Dendritic cell treated with granulocyte-macrophage colony-stimulating factor and Interleukin-4, amounts not matched to agents 40 ng/mL and 50 ng/mL, for 4 days (primary cell): ENCODE measurements at regions of chr12 and their contacts with region 1.

Region 1: GRCh38 chr12:3872800-3873636 is at the start of gene PARP11:
- H3K4me3 Mint-ChIP-seq: peak within 1 kb of the TSS; percentile 90
- H3K27ac Mint-ChIP-seq: peak within 1 kb of the TSS; percentile 96
- H3K4me1 Mint-ChIP-seq: peaks cover 42% of the 10 kb centered on the region
- H3K27me3 Mint-ChIP-seq: peaks cover 1% of the 10 kb centered on the region

Region 2: GRCh38 chr12:3670083-3670620 is 202.9 kb before region 1 on chr12:
- intact Hi-C with region 1: no loop called
- H3K4me3 Mint-ChIP-seq: no peak overlapping the region
- H3K27ac Mint-ChIP-seq: no peak overlapping the region
- H3K4me1 Mint-ChIP-seq: no peaks in the 10 kb centered on the region
- H3K27me3 Mint-ChIP-seq: no peaks in the 10 kb centered on the region

Region 3: DNA sequence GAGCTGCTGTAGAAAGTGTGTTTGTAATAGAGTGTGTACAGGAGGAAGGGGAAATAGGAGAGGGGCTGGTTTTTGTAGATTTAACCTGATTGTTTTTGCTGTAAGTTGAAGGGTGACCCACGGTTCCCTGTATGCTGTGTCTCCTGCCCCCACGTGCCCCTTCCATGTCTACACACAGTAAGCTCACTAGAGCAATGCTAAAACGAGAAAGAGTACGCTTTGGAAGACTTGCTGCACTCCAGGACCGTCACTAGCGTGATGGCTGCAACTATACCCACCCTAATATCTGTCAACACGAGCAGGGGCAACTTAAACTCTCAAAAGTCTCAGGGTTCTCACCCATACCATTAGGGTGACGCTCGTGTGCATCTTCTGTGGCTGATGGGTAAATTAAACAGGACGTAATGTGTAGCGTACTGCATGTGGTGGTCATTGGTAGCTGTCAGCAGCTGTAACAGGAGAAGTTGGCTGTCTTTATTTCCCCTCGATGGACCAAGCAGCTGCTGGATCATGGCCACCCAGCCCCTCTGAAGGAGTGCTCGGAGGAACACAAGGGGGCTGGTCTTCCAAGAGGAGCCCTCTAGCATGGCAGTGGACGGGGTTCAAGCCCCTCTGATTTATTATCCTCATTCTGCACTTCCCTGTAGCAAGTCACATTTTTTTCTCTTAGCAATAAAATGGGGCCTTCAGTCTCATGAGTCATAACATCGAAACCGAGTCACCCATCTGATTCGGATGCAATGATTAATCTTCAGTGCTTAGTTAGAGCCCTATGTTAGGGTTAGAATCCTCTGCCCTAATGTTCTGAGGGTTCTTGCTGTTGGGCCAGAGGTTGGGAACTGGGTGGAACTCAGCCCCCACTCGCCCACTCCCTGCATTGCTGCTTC is 414.6 kb after region 1 on chr12:
- intact Hi-C with region 1: loop called (anchors 5 kb)
- H3K4me3 Mint-ChIP-seq: peak overlapping the region; percentile 41
- H3K27ac Mint-ChIP-seq: peak overlapping the region; percentile 88
- H3K4me1 Mint-ChIP-seq: peaks cover 84% of the 10 kb centered on the region
- H3K27me3 Mint-ChIP-seq: peaks cover 1% of the 10 kb centered on the region

Region 4: DNA sequence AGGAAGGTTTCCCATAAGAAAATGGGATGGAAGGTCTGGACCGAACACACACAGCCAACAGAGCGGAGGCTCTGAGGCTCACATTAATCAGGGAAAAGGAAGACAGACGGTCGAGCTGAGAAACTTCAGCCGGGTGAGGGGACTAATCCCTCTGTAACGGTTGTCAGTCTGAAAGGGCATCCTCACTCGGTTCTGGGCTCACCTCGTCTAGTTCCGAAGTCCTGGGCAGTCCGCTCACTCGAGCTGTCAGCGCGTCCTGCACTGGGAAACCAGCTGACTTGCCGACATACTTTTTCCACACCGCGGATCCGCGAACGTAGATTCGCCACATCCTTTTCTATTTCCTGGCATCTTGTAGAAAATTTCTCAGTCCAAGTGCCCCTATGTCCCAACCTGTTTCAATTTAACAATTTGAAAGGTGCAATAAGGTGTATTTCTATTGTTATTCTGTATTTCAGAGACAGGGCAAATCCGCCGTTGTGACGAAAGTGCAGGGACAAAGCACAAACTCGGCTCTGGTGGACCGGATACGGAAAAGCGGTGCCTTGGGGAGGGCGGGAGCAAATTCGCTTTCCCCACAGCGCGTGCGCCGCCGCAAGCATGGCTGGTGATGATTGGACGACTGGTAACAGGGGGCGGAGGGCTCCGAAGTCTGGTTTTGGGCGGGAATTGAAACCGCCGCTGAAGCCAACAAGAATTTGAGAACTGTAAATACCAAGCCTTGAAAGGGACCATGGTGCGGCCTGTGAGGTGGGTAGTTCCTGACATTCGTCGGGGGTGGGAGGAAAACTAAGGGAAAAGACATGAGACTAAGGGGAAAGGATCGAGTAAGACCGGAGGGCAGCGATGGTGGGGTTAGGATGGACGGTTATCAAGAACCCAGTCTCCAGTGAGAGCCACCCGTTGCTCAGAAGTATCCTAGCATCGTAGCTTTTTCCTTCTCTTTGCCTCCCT is 665.5 kb after region 1 on chr12 and contains the start of gene RAD51AP1:
- intact Hi-C with region 1: loop called (anchors 5 kb)
- H3K4me3 Mint-ChIP-seq: peak within 1 kb of the TSS; percentile 92
- H3K27ac Mint-ChIP-seq: peak within 1 kb of the TSS; percentile 96
- H3K4me1 Mint-ChIP-seq: peaks cover 21% of the 10 kb centered on the region
- H3K27me3 Mint-ChIP-seq: no peaks in the 10 kb centered on the region